ENCODE measurements at regions of chr7 and their contacts with region 1.

Region 1: GRCh38 chr7:6589829-6590644 is at the start of gene INTS15:
- DNase-seq: peak; percentile 77 to 81 (median 78)
- H3K4me3 ChIP-seq: peak within 1 kb of the TSS; percentile 44 to 87 (median 74)
- H3K4me3 Mint-ChIP-seq: peak within 1 kb of the TSS; percentile 79 to 88
- H3K27ac ChIP-seq: peak within 1 kb of the TSS; percentile 19 to 74
- H3K27ac Mint-ChIP-seq: peak within 1 kb of the TSS; percentile 44 to 88 (median 80)
- H3K4me1 ChIP-seq: peaks cover 13 to 20% of the 10 kb centered on the region in 2 donors
- H3K4me1 Mint-ChIP-seq: peaks cover 15% of the 10 kb centered on the region
- H3K27me3 ChIP-seq: no peaks in the 10 kb centered on the region
- H3K27me3 Mint-ChIP-seq: no peaks in the 10 kb centered on the region
- CTCF ChIP-seq: peak; percentile 85
- polyA plus RNA-seq, gene INTS15: 16.9 to 32.7 (median 17.2) TPM

Region 2: DNA sequence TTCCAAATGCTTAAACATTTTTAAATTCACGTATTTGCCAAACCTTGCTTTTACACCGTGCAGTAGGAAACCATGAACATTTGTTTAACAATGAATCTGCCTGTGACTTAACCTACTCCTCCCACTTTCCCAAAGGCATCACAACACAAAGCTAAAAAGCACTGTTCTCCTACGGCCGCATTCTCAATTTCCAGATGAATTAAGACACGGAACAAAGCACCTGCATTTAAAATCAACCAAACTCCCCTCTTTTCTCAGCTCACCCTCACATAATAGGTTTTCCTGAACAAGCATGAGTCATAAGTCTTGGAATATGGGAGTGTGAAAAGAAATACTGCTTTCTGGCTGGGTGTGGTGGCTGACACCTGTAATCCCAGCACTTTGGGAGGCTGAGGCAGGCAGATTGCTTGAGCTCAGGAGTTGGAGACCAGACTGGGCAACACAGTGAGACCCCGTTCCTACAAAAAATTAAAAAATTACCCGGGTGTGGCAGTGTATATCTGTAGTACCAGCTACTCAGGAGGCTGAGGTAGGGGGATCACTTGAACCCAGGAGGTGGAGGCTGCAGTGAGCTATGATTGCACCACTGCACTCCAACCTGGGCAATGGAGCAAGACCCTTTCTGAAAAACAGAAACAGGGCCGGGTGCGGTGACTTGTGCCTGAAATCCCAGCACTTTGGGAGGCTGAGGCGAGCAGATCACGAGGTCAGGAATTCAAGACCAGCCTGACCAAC is 265.9 kb before region 1 on chr7:
- intact Hi-C with region 1: no loop called
- DNase-seq: no peak
- H3K4me3 ChIP-seq: no peak overlapping the region
- H3K4me3 Mint-ChIP-seq: no peak overlapping the region
- H3K27ac ChIP-seq: no peak overlapping the region
- H3K27ac Mint-ChIP-seq: no peak overlapping the region
- H3K4me1 ChIP-seq: peaks cover 0 to 8% of the 10 kb centered on the region in 2 donors
- H3K4me1 Mint-ChIP-seq: peaks cover 15% of the 10 kb centered on the region
- H3K27me3 ChIP-seq: no peaks in the 10 kb centered on the region
- H3K27me3 Mint-ChIP-seq: peaks cover 0 to 5% (median 2%) of the 10 kb centered on the region in 3 donors
- CTCF ChIP-seq: no peak

Region 3: GRCh38 chr7:6631605-6632004 is 41.6 kb after region 1 on chr7:
- intact Hi-C with region 1: loop called (anchors 5 kb)
- DNase-seq: no peak
- H3K4me3 ChIP-seq: no peak overlapping the region
- H3K4me3 Mint-ChIP-seq: peak overlapping the region in 1 of 2 donors; percentile 26
- H3K27ac ChIP-seq: no peak overlapping the region
- H3K27ac Mint-ChIP-seq: no peak overlapping the region
- H3K4me1 ChIP-seq: peaks cover 26 to 34% of the 10 kb centered on the region in 2 donors
- H3K4me1 Mint-ChIP-seq: peaks cover 23% of the 10 kb centered on the region
- H3K27me3 ChIP-seq: no peaks in the 10 kb centered on the region
- H3K27me3 Mint-ChIP-seq: peaks cover 11 to 18% (median 13%) of the 10 kb centered on the region in 3 donors
- CTCF ChIP-seq: no peak

Region 4: GRCh38 chr7:6706677-6707544 is 116.9 kb after region 1 on chr7 and contains the start of gene ZNF12:
- intact Hi-C with region 1: loop called in 1 of 2 experiments (anchors 10 kb)
- DNase-seq: peak; percentile 92 to 94 (median 94)
- H3K4me3 ChIP-seq: peak within 1 kb of the TSS; percentile 67 to 87 (median 78)
- H3K4me3 Mint-ChIP-seq: peak within 1 kb of the TSS; percentile 93 to 96
- H3K27ac ChIP-seq: peak within 1 kb of the TSS; percentile 34 to 88
- H3K27ac Mint-ChIP-seq: peak within 1 kb of the TSS; percentile 64 to 89 (median 82)
- H3K4me1 ChIP-seq: peaks cover 17 to 23% of the 10 kb centered on the region in 2 donors
- H3K4me1 Mint-ChIP-seq: peaks cover 31% of the 10 kb centered on the region
- H3K27me3 ChIP-seq: peaks cover 0 to 2% of the 10 kb centered on the region in 2 donors
- H3K27me3 Mint-ChIP-seq: peaks cover 7 to 12% (median 9%) of the 10 kb centered on the region in 3 donors
- CTCF ChIP-seq: no peak
- polyA plus RNA-seq, gene ZNF12: 4.9 to 8.1 (median 5.7) TPM

Region 5: DNA sequence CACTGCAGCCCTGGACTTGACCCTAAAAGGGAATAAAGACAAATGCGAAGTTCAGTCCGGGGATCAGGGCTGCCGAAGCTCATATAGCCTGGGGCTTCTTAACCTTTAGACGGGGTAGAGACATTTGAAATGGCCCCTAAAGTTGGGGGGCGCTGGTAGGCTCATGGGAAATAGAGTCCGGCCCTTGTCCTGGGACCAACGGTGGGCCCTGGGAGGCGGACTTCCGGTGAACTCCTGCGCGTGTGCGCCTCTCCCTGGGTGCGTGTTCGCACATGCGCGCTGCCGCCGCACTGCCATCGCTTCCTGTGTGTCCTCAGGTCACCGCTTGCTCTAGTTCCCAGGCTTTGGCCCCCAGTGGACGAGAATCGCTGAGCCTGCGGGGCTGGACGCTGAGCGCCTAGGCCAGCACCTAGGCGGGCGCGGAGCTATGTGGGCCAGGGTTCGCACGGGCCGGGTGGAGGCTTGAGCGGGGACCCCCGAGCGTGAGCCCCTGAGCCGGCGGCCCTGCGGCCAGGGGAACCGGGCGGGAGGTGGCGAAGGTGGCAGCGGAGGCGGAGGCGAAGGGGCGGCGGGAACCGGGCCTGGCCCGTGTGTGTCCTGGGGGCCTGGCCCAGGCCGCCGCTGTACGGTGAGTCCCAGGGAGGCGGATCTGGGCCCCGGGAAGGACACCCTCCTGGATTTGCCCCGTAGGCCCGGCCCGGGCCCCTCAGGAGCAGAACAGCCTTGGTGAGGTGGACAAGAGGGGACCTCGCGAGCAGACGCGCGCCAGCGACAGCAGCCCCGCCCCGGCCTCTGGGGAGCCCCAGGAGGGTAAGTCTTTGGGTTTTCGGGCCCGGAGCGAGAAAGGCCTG is 139.7 kb after region 1 on chr7:
- intact Hi-C with region 1: loop called in 1 of 2 experiments (anchors 5 kb)
- DNase-seq: peak; percentile 91 to 94 (median 92)
- H3K4me3 ChIP-seq: peak overlapping the region; percentile 72 to 90 (median 84)
- H3K4me3 Mint-ChIP-seq: peak overlapping the region; percentile 89 to 97
- H3K27ac ChIP-seq: peak overlapping the region; percentile 55 to 81
- H3K27ac Mint-ChIP-seq: peak overlapping the region; percentile 85 to 91 (median 88)
- H3K4me1 ChIP-seq: peaks cover 27 to 28% of the 10 kb centered on the region in 2 donors
- H3K4me1 Mint-ChIP-seq: peaks cover 31% of the 10 kb centered on the region
- H3K27me3 ChIP-seq: no peaks in the 10 kb centered on the region
- H3K27me3 Mint-ChIP-seq: peaks cover 3 to 10% (median 10%) of the 10 kb centered on the region in 3 donors
- CTCF ChIP-seq: no peak